Endothelial cell of umbilical vein (primary cell): ENCODE measurements at regions of chr6 and their contacts with region 1.

Region 1: GRCh38 chr6:30616811-30617564 is at the start of gene PPP1R10:
- DNase-seq: peak; percentile 100
- H3K4me3 ChIP-seq: peak within 1 kb of the TSS; percentile 51 to 84 (median 73)
- H3K27ac ChIP-seq: peak within 1 kb of the TSS; percentile 96
- H3K4me1 ChIP-seq: peaks cover 21% of the 10 kb centered on the region
- H3K27me3 ChIP-seq: no peaks in the 10 kb centered on the region
- CTCF ChIP-seq: no peak
- POLR2A ChIP-seq: peak; percentile 100
- total RNA-seq, gene PPP1R10: 75.1 and 88.3 TPM in 2 replicates

Region 2: DNA sequence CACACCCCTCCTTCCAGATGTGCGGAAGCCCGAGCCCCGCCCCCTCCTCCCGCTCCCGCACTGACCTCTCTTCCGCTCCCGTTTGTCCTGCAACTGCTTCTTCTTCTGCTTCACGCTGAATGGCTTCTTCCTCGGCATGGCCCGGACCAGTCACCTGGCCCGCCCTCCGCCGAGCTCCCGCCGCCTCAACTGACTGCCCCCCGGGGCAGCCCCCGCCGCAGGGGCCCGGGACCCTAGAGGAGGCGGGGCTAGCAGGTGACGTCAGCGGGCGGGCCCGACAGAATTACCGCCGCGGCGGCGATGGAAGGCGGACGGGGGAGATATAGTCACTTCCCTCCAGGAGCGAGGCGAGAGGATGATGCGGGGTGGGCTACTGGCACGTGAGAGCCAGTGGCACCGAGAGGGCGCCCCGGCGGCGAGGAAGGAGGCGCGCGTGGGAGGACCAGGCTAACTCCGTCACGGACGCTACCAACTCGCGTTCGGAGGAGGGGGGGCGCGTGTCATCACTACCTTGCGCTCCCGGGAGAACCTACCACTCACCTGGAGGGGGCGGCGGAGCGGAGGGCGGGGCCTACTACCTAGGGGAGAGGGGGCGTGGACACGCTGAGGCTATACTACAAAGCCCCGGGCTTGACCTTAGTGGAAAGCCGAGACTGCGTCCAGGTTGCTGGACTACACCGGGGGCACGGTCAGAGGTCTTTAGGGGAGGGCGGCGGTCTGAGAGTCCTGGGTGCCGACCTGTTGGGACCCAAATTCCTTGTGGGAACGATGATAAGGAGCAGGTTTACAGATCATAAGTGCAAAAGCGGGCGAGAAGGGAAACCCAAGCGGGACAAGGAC is 60.7 kb before region 1 on chr6 and contains the start of gene GNL1:
- CTCF ChIA-PET with region 1: no interaction called
- POLR2A ChIA-PET with region 1: no interaction called
- dilution Hi-C with region 1: no loop called
- intact Hi-C with region 1: loop called (anchors 1 kb)
- DNase-seq: peak; percentile 88
- H3K4me3 ChIP-seq: peak within 1 kb of the TSS; percentile 39 to 93 (median 52)
- H3K27ac ChIP-seq: peak within 1 kb of the TSS; percentile 84
- H3K4me1 ChIP-seq: peaks cover 19% of the 10 kb centered on the region
- H3K27me3 ChIP-seq: no peaks in the 10 kb centered on the region
- CTCF ChIP-seq: no peak
- POLR2A ChIP-seq: no peak
- total RNA-seq, gene GNL1: 87.3 and 103 TPM in 2 replicates

Region 3: GRCh38 chr6:30600451-30600961 is 16.5 kb before region 1 on chr6:
- CTCF ChIA-PET with region 1: interaction called, 47 read pairs
- POLR2A ChIA-PET with region 1: interaction called, 63 read pairs
- dilution Hi-C with region 1: no loop called
- intact Hi-C with region 1: no loop called
- DNase-seq: no peak
- H3K4me3 ChIP-seq: no peak overlapping the region
- H3K27ac ChIP-seq: no peak overlapping the region
- H3K4me1 ChIP-seq: peaks cover 8% of the 10 kb centered on the region
- H3K27me3 ChIP-seq: no peaks in the 10 kb centered on the region
- CTCF ChIP-seq: no peak
- POLR2A ChIP-seq: peak; percentile 20

Region 4: GRCh38 chr6:30672445-30673253 is 55.7 kb after region 1 on chr6 and contains the start of gene DHX16:
- CTCF ChIA-PET with region 1: interaction called, 7 read pairs
- POLR2A ChIA-PET with region 1: interaction called, 17 read pairs
- dilution Hi-C with region 1: no loop called
- intact Hi-C with region 1: loop called (anchors 1 kb)
- DNase-seq: peak; percentile 97
- H3K4me3 ChIP-seq: peak within 1 kb of the TSS; percentile 38 to 82 (median 73)
- H3K27ac ChIP-seq: peak within 1 kb of the TSS; percentile 11
- H3K4me1 ChIP-seq: peaks cover 6% of the 10 kb centered on the region
- H3K27me3 ChIP-seq: no peaks in the 10 kb centered on the region
- CTCF ChIP-seq: peak; percentile 84 to 93
- POLR2A ChIP-seq: peak; percentile 85
- total RNA-seq, gene DHX16: 36.3 and 38.2 TPM in 2 replicates

Region 5: DNA sequence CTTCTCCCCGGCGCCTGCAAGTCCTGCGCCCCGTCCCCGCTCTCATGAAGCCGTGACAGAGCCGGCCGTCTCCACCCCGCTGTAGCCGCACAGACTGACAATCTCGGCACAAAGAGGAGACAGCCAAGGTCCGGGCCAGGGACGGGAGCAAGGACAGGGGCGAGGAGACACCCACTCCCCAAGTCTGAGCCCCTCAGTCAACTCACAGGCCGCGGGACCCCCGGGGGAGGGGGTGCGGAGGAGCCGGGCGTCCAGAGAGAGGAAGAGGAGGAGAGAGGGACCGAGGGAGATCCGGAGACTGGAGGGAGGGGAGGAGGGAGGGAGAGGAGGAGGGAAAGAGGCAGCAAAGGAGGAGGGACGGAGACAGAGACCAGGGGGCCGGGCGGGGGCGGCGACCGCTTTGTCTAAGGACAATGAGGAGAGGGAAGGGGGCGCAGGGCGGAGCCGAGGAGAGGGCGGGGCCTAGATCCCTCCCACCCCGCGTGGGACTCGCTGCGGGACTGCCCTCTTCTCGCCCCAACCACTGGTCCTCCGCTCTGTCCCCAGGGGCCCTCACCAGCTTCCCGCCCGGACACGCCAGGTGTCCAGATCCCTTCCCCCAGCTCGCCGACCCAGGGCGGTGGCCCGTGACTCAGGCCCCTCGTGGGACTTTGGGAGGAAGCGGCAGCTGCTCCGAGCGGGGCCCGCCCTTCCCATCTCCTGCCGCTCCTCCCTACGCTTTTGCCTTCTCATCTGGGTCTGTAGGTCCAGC is 70.1 kb after region 1 on chr6:
- CTCF ChIA-PET with region 1: no interaction called
- POLR2A ChIA-PET with region 1: no interaction called
- dilution Hi-C with region 1: no loop called
- intact Hi-C with region 1: no loop called
- DNase-seq: peak; percentile 93
- H3K4me3 ChIP-seq: peak overlapping the region; percentile 76 to 92 (median 81)
- H3K27ac ChIP-seq: peak overlapping the region; percentile 93
- H3K4me1 ChIP-seq: peaks cover 33% of the 10 kb centered on the region
- H3K27me3 ChIP-seq: no peaks in the 10 kb centered on the region
- CTCF ChIP-seq: no peak
- POLR2A ChIP-seq: peak; percentile 96